GM10248 (cell line): ENCODE measurements at regions of chr6 and their contacts with region 1.

Region 1: DNA sequence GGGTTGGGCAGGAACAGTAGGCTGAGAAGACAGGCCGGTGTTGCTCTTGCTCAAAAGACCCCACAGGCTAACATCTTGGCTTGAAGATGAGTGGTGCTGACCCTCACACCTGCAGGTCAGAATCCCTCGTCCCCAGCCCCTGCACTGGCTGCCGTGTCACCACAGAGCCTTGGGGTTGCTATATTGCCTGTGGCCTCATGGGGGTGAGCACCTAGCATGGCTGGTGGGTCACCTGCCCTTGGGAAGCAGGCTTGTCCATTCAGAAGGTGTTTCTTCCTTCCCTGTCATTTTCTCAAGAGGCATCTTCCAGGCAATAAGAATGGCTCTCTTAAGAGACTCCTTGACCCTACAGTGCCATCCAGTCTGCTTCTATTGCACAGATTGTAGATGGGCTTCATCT is 7.7 kb downstream of the SLC22A16 start:
- DNase-seq: no peak
- CTCF ChIP-seq: no peak

Region 2: GRCh38 chr6:110446405-110446804 is 22.3 kb before region 1 on chr6:
- CTCF ChIA-PET with region 1: no interaction called
- POLR2A ChIA-PET with region 1: interaction called, 11 read pairs
- DNase-seq: no peak
- CTCF ChIP-seq: no peak

Region 3: DNA sequence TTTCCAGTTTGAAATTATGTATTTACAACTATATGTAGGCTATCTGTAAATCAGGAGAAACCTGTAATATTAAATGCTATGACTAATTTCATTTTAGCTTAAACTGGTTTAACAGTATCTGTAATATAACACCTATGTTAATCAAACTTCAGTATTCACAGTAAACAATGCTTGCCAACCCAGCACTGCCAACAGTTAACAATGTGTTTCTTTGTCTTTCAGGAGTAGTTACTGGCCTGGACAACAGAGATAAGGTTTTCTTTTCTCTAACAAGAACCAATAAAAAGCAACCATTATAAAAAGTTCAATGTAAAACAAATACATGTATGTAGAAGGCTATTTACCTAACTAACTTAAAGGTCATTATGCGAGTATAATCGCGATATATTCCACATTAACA is 187.8 kb after region 1 on chr6:
- CTCF ChIA-PET with region 1: no interaction called
- POLR2A ChIA-PET with region 1: no interaction called
- DNase-seq: no peak
- CTCF ChIP-seq: no peak